Gastrocnemius medialis (tissue), 4 donors: ENCODE measurements at regions of chr9 and their contacts with region 1.

Region 1: DNA sequence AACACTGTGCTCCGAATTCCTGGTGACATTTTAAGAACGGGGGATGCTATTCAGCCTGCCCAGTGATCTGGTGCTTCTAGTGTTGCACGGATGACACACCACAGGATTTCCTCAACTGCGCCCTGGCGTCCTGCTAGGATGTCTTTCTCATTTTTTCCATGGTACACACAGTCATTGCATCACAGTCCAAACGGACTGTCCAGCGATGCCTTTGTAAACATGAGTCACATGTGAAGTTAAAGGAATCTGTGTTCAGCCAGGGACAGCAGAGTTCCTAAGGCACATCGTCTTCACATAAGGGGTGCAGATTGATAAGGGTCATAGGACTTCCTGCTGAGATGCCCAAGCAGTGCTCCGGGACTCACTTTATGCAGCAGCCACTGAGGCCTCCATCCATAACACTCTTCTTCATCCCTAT is 9.3 kb upstream of the PTPN3 start:
- DNase-seq: peak; percentile 93 to 97
- ATAC-seq: peak; percentile 96
- H3K4me3 ChIP-seq: peak overlapping the region in 1 of 4 donors; percentile 1
- H3K27ac ChIP-seq: peak overlapping the region; percentile 87 to 94 (median 91)
- H3K4me1 ChIP-seq: peaks cover 24 to 26% of the 10 kb centered on the region in 2 donors
- H3K27me3 ChIP-seq: no peaks in the 10 kb centered on the region
- CTCF ChIP-seq: no peak
- POLR2A ChIP-seq: peak in 1 of 2 donors; percentile 53

Region 2: DNA sequence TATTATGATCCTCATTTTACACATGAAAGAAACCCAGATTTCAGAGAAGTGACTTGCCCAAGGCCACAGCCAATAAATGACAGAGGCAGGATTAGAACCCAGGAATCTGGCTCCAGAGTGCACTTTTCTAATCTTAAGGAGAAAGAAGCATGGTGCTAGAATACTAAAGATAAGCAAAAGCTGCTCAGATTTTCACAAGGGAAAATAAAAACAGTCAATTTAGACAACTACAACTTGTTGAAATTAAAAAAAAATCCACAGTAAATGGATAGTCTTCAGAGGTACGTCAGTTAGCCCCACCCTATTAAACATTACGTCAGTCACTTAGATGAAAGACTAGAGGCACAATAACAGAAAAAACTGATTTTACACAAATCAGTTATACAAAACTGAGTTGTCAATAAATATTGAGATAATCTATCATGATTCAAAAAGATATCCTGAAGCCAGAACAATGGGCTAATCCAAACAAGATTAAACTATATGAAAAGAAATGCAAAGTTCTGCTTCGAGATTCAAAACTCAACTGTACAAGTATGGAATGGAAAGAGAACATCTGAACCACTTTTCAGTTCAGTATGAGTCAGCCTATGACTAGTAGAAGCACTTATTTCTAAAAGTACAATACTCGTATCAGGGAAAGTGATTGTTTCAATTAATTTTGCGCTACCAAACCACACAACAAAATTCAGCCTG is 397.0 kb before region 1 on chr9:
- in situ Hi-C with region 1: no loop called
- intact Hi-C with region 1: loop called (anchors 5 kb)
- DNase-seq: no peak
- ATAC-seq: peak in 1 of 2 donors; percentile 26
- H3K4me3 ChIP-seq: peak overlapping the region in 3 of 4 donors; percentile 2 to 18 (median 6)
- H3K27ac ChIP-seq: peak overlapping the region; percentile 76 to 98 (median 88)
- H3K4me1 ChIP-seq: peaks cover 70 to 83% of the 10 kb centered on the region in 2 donors
- H3K27me3 ChIP-seq: no peaks in the 10 kb centered on the region
- CTCF ChIP-seq: no peak
- POLR2A ChIP-seq: no peak

Region 3: GRCh38 chr9:109122726-109123621 is 384.5 kb before region 1 on chr9:
- in situ Hi-C with region 1: no loop called
- intact Hi-C with region 1: no loop called
- DNase-seq: no peak
- ATAC-seq: no peak
- H3K4me3 ChIP-seq: no peak overlapping the region
- H3K27ac ChIP-seq: no peak overlapping the region
- H3K4me1 ChIP-seq: peaks cover 9 to 14% of the 10 kb centered on the region in 2 donors
- H3K27me3 ChIP-seq: no peaks in the 10 kb centered on the region
- CTCF ChIP-seq: no peak
- POLR2A ChIP-seq: no peak

Region 4: GRCh38 chr9:109422641-109423040 is 84.8 kb before region 1 on chr9:
- in situ Hi-C with region 1: no loop called
- intact Hi-C with region 1: loop called (anchors 1 kb)
- DNase-seq: no peak
- ATAC-seq: no peak
- H3K4me3 ChIP-seq: no peak overlapping the region
- H3K27ac ChIP-seq: peak overlapping the region; percentile 90 to 95 (median 92)
- H3K4me1 ChIP-seq: peaks cover 34 to 52% of the 10 kb centered on the region in 2 donors
- H3K27me3 ChIP-seq: no peaks in the 10 kb centered on the region
- CTCF ChIP-seq: no peak
- POLR2A ChIP-seq: no peak

Region 5: DNA sequence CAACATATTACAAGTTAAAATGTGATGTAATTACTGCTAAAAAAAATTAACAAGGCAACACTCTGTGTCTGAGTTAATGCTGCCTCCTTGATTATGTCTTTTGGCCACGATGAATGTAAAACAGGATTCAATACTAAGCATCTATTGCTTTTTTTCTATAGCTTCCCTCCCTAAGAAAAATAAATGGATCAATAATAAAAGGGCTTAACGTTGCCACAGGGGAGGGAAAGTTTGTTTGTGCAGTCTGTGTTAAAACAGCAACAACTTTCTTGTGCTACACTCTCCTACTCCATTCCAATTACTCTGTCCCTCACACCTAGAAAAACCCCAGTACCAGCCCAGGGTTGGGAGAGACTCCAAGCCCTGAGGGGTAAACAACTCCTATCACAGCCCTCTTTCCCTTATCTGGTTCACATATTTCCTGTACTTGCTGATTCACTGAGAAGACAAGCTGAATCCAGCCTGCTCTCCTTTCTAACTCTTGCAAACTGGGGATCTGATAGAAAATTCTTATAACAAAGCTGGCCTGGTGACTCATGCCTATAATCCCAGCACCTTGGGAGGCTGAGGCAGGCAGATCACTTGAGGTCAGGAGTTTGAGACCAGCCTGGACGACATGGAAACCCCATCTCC is 54.1 kb before region 1 on chr9:
- in situ Hi-C with region 1: no loop called
- intact Hi-C with region 1: loop called (anchors 2 kb)
- DNase-seq: no peak
- ATAC-seq: no peak
- H3K4me3 ChIP-seq: no peak overlapping the region
- H3K27ac ChIP-seq: peak overlapping the region; percentile 6 to 82 (median 66)
- H3K4me1 ChIP-seq: peaks cover 21 to 35% of the 10 kb centered on the region in 2 donors
- H3K27me3 ChIP-seq: no peaks in the 10 kb centered on the region
- CTCF ChIP-seq: no peak
- POLR2A ChIP-seq: no peak

Region 6: GRCh38 chr9:109475526-109475925 is 31.9 kb before region 1 on chr9:
- in situ Hi-C with region 1: no loop called
- intact Hi-C with region 1: loop called (anchors 1 kb)
- DNase-seq: peak; percentile 72 to 85
- ATAC-seq: peak; percentile 73 to 75
- H3K4me3 ChIP-seq: no peak overlapping the region
- H3K27ac ChIP-seq: peak overlapping the region; percentile 79 to 91 (median 84)
- H3K4me1 ChIP-seq: peaks cover 69 to 75% of the 10 kb centered on the region in 2 donors
- H3K27me3 ChIP-seq: no peaks in the 10 kb centered on the region
- CTCF ChIP-seq: no peak
- POLR2A ChIP-seq: peak in 1 of 2 donors; percentile 46